Ascending aorta (tissue), 2 donors: ENCODE measurements at regions of chr20 and their contacts with region 1.

Region 1: GRCh38 chr20:63627129-63627750 is 339 bp upstream of the GMEB2 start:
- DNase-seq: peak; percentile 76 to 97
- H3K4me3 ChIP-seq: peak overlapping the region; percentile 79 to 100
- H3K27ac ChIP-seq: peak overlapping the region; percentile 89 to 98
- H3K4me1 ChIP-seq: peaks cover 6 to 7% of the 10 kb centered on the region in 2 donors
- H3K27me3 ChIP-seq: no peaks in the 10 kb centered on the region
- CTCF ChIP-seq: no peak

Region 2: DNA sequence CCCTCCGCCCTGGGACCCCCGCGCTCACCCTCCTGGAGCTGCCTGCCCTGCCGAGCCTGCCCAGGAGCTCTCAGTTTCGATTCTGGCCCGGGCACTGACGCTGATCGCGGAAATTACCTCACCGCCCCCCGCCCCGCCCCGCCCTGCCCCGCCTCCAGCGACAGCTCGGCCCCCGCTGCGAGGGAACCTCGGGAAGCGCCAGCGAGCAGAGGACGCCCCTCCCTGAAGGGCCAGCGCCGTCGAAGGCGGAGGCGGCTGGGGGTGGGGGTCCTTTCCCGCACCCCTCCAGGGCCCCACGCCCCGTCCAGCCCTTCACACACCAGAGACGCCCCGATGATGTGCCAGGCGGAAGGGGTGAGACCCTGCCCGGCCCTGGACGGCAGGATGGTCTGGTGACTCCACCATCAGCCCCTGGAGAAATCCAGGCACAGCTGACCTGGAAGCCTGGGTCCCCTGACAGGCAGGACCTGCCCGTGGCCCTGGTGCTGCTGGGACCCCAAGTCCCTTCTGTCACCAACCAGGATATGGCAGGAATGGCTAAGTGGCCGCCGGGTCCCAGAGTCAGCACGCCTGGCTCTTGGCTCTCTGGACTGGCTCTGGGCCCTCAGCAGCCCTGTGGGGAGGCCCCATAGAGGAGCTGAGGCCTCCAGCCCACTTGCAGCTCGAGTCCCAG is 52.9 kb before region 1 on chr20 and contains the start of gene HELZ2:
- intact Hi-C with region 1: loop called (anchors 5 kb)
- DNase-seq: peak in 1 of 2 donors; percentile 86
- H3K4me3 ChIP-seq: peak within 1 kb of the TSS; percentile 70 to 92
- H3K27ac ChIP-seq: peak within 1 kb of the TSS; percentile 62 to 68
- H3K4me1 ChIP-seq: peaks cover 8 to 9% of the 10 kb centered on the region in 2 donors
- H3K27me3 ChIP-seq: no peaks in the 10 kb centered on the region
- CTCF ChIP-seq: no peak
- total RNA-seq, gene HELZ2: 58.1 TPM

Region 3: DNA sequence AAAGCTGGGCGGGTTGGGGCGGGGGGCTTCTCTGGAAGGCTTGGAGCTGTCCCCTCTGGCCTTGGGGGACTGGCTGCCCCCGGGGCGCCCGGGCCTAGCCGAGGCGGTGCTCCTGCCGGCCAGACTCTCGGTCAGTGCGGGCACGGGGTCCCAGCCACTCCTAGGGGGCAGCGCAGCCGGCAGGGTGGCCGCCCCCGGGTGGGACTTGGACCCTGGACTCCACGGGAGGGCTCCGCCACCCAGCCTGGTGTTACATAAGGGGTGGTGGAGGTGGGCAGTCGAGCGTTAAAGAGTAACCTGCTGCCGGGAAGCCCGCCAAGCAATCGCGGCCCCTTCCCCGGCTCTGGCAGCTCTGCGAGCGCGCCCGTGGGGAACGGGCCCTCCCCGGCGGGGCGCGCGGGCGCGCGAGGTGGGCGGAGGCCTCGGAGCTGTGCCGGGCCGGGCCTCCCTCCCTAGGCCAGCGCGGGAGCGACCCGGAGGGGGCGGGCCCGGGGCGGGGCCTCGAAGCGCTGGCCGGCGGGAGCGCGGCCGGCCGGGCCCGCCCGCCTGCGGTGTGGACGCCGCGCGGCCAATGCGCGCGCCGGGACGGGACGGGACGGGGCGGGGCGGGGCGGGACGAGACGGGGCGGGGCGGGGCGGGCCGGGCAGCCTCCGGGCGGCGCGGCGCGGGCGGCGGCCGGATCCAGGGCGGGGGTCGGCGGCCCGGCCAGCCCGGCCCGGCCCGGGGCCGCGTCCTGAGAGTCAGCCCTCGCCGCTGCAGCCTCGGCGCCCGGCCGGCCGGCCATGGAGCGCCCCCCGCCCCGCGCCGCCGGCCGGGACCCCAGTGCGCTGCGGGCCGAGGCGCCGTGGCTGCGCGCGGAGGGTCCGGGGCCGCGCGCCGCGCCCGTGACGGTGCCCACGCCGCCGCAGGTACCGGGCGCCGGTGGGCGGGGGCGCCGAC is 112.2 kb after region 1 on chr20 and contains the start of gene SLC2A4RG:
- intact Hi-C with region 1: loop called (anchors 5 kb)
- DNase-seq: peak in 1 of 2 donors; percentile 86
- H3K4me3 ChIP-seq: peak within 1 kb of the TSS; percentile 85 to 93
- H3K27ac ChIP-seq: peak within 1 kb of the TSS; percentile 87 to 96
- H3K4me1 ChIP-seq: peaks cover 17 to 21% of the 10 kb centered on the region in 2 donors
- H3K27me3 ChIP-seq: no peaks in the 10 kb centered on the region
- CTCF ChIP-seq: no peak
- total RNA-seq, gene SLC2A4RG: 114 TPM

Region 4: GRCh38 chr20:63894358-63895201 is 267.3 kb after region 1 on chr20 and contains the start of gene DNAJC5:
- intact Hi-C with region 1: loop called (anchors 10 kb)
- DNase-seq: peak; percentile 64 to 96
- H3K4me3 ChIP-seq: peak within 1 kb of the TSS; percentile 77 to 91
- H3K27ac ChIP-seq: peak within 1 kb of the TSS; percentile 62 to 63
- H3K4me1 ChIP-seq: peaks cover 11 to 12% of the 10 kb centered on the region in 2 donors
- H3K27me3 ChIP-seq: no peaks in the 10 kb centered on the region
- CTCF ChIP-seq: no peak
- total RNA-seq, gene DNAJC5: 42.9 TPM

Region 5: DNA sequence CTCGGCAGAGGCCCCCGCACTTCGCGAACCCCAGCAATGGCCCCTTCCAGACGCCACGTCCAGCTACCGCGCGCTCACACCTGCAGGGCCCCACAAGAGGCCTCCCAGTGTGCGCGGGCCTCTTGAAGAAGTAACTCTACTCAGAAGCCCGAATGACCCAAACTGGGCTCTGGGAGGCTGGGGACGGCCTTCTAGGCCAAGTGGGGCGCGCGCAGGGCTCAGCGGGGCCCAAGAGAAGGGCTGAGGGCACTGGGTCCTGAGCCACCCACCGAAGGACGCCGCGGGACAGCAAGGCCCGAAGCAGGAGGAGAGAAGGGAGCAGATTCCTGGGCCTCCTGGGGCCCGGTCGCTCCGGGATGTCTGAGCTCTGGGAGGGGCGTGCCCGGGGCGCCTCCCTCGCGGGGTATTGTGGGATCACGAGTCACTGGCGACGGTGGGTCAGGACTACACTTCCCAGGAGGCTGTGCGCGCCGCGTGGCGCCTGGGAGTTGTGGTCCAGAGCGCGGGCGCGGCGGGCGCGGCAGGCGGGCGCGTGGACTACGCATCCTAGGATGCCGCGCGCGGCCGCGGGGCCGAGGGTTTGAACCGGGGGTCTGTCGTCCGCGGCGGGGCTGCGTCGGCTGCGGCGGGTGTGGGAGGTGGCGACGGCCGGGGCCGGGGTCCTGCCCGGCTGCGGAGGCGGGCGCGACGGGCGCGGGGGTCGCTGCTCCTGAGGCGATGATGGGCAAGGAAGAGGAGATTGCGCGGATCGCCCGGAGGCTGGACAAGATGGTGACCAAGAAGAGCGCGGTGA is 435.6 kb after region 1 on chr20 and contains the start of gene TCEA2:
- intact Hi-C with region 1: loop called (anchors 5 kb)
- DNase-seq: peak; percentile 89 to 98
- H3K4me3 ChIP-seq: peak within 1 kb of the TSS; percentile 76 to 93
- H3K27ac ChIP-seq: peak within 1 kb of the TSS; percentile 87 to 90
- H3K4me1 ChIP-seq: peaks cover 16 to 22% of the 10 kb centered on the region in 2 donors
- H3K27me3 ChIP-seq: no peaks in the 10 kb centered on the region
- CTCF ChIP-seq: no peak
- total RNA-seq, gene TCEA2: 61.4 TPM